Stomach (tissue), 19 donors: ENCODE measurements at regions of chr5 and their contacts with region 1.

Region 1: DNA sequence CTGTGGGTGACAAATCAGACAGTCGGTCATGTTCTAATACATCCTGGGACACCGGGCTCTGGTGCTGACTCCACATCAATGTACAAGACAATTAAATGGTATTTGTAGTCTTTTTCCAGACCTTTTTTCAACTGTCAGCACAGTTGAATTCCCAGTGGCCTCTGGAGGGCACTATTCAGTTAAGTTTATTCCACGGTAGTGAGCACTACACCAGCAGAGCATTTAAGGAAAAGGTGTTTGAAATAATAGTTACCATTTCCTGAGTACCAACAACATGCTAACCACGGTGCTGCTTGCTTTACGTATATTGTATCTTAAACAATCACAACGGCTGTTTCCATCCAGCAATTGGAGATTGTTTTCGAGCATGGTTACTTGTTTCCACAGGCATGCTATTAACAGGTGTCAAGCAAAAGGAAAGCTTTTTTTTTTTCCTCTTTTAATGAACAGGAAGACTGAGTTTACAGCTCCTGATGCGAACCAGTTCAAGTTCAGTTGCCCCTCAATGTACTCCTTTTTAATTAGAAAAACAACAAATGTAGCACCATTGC is 186.7 kb downstream of the PDZD2 start:
- DNase-seq: peak; percentile 50 to 84
- H3K4me3 ChIP-seq: no peak overlapping the region
- H3K27ac ChIP-seq: no peak overlapping the region
- H3K4me1 ChIP-seq: no peaks in the 10 kb centered on the region
- H3K27me3 ChIP-seq: no peaks in the 10 kb centered on the region
- CTCF ChIP-seq: peak in 5 of 7 experiments; percentile 38 to 74 (median 57)
- EP300 ChIP-seq: no peak
- POLR2A ChIP-seq: no peak

Region 2: GRCh38 chr5:32076699-32077695 is 251.4 kb after region 1 on chr5:
- intact Hi-C with region 1: loop called (anchors 5 kb)
- DNase-seq: peak; percentile 38 to 81
- H3K4me3 ChIP-seq: no peak overlapping the region
- H3K27ac ChIP-seq: no peak overlapping the region
- H3K4me1 ChIP-seq: no peaks in the 10 kb centered on the region
- H3K27me3 ChIP-seq: no peaks in the 10 kb centered on the region
- CTCF ChIP-seq: peak in 5 of 7 experiments; percentile 42 to 66 (median 46)
- EP300 ChIP-seq: no peak
- POLR2A ChIP-seq: no peak

Region 3: DNA sequence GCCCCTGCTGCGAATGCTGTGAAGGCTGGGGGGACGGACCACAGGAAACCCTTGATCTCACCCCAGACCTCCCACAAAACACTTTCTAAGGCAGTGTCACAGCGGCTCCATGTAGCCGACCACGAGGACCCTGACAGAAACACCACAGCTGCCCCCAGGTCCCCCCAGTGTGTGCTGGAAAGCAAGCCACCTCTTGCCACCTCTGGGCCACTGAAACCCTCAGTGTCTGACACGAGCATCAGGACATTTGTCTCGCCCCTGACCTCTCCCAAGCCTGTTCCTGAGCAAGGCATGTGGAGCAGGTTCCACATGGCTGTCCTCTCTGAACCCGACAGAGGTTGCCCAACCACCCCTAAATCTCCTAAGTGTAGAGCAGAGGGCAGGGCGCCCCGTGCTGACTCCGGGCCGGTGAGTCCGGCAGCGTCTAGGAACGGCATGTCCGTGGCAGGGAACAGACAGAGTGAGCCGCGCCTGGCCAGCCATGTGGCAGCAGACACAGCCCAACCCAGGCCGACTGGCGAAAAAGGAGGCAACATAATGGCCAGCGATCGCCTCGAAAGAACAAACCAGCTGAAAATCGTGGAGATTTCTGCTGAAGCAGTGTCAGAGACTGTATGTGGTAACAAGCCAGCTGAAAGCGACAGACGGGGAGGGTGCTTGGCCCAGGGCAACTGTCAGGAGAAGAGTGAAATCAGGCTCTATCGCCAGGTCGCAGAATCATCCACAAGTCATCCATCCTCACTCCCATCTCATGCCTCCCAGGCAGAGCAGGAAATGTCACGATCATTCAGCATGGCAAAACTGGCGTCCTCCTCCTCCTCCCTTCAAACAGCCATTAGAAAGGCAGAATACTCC is 263.8 kb after region 1 on chr5:
- intact Hi-C with region 1: loop called (anchors 5 kb)
- DNase-seq: no peak
- H3K4me3 ChIP-seq: no peak overlapping the region
- H3K27ac ChIP-seq: no peak overlapping the region
- H3K4me1 ChIP-seq: peaks cover 0 to 8% (median 4%) of the 10 kb centered on the region in 4 donors
- H3K27me3 ChIP-seq: no peaks in the 10 kb centered on the region
- CTCF ChIP-seq: no peak
- EP300 ChIP-seq: no peak
- POLR2A ChIP-seq: no peak